Spleen (tissue), 13 donors: ENCODE measurements at regions of chr12 and their contacts with region 1.

Region 1: DNA sequence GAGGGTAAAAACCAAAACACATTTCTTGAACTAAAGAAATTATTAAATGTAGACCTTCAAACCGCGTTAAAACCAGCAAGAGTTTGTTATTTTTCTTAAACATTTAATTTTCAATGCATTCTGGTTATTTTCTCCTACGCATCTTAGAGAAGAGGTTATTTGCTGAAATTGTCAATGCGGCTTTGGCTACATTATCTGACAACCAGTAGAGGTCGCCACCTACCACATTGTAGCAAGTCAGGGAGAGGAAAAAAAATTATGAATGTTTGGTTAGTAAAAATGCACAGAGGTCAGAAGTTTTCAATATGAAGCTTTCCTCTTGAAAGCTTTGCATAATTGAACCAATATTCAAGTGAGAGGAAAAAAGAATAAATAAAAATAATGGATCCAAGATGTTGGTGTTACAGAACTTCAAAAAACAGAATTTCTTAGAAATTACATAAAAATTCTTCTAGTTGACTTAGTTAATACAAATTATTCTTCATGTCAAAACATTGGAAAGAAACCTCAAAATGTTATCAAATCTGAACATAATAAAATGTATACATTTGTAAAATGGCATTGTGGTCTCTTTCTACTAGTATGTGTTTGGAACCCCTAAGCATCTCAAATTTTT is 159.4 kb upstream of the TMTC2 start:
- DNase-seq: no peak
- H3K4me3 ChIP-seq: no peak overlapping the region
- H3K27ac ChIP-seq: no peak overlapping the region
- H3K4me1 ChIP-seq: no peaks in the 10 kb centered on the region
- H3K27me3 ChIP-seq: peaks cover 0 to 7% (median 0%) of the 10 kb centered on the region in 7 donors
- CTCF ChIP-seq: peak in 9 of 11 experiments; percentile 38 to 72 (median 60)
- POLR2A ChIP-seq: no peak

Region 2: DNA sequence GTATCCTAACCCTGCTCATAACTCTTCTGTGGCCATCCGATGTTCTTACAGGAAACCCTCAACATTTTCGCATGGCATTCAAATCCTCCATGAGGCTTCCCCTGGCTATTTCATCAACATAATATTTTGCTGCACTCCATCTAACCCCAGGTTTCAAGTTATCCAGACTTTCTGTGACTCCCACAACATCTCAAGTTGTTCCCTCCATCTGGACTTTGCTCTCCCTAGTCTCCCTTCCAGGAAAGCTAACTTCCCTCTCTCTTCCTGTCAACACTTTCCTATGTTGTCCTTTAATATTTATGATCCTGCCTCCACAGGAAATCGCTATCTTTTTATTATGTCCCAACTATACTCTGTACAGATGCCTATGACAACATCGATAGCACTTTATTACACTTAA is 22.9 kb before region 1 on chr12:
- intact Hi-C with region 1: no loop called
- DNase-seq: no peak
- H3K4me3 ChIP-seq: no peak overlapping the region
- H3K27ac ChIP-seq: no peak overlapping the region
- H3K4me1 ChIP-seq: no peaks in the 10 kb centered on the region
- H3K27me3 ChIP-seq: no peaks in the 10 kb centered on the region
- CTCF ChIP-seq: no peak
- POLR2A ChIP-seq: no peak

Region 3: GRCh38 chr12:84502907-84503787 is 1975.9 kb after region 1 on chr12:
- intact Hi-C with region 1: loop called (anchors 10 kb)
- DNase-seq: no peak
- H3K4me3 ChIP-seq: no peak overlapping the region
- H3K27ac ChIP-seq: no peak overlapping the region
- H3K4me1 ChIP-seq: no peaks in the 10 kb centered on the region
- H3K27me3 ChIP-seq: no peaks in the 10 kb centered on the region
- CTCF ChIP-seq: peak in 9 of 11 experiments; percentile 5 to 58 (median 37)
- POLR2A ChIP-seq: no peak